ENCODE measurements at regions of chr5 and their contacts with region 1.

Region 1: DNA sequence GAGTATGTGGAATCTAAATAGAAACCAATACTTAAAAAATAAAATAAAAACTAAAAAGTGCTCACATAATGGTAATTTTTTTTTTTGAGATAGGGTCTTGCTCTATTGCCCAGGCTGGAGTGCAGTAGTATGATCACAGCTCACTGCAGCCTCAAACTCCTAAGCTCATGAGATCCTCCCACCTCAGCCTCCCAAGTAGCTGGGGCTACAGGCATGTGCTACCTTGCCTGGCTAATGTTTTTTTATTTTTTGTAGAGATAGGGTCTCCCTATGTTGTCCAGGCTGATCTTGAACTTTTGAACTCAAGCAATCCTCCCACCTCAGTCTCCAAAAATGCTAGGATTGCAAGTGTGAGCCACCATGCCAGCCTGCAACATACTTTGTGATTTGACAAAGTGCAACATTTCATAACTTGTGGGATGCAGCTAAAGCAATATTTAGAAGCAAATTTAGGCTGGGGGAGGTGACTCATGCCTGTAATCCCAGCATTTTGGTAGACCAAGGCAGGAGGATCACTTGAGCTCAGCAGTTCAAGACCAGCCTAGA is 18.4 kb downstream of the AP3B1 start:
- DNase-seq: no peak
- ATAC-seq: no peak
- H3K4me3 ChIP-seq: no peak overlapping the region
- H3K4me3 Mint-ChIP-seq: no peak overlapping the region
- H3K27ac ChIP-seq: no peak overlapping the region
- H3K27ac Mint-ChIP-seq: no peak overlapping the region
- H3K4me1 ChIP-seq: no peaks in the 10 kb centered on the region
- H3K4me1 Mint-ChIP-seq: peaks cover 49% of the 10 kb centered on the region
- H3K27me3 ChIP-seq: no peaks in the 10 kb centered on the region
- H3K27me3 Mint-ChIP-seq: no peaks in the 10 kb centered on the region
- CTCF ChIP-seq: no peak

Region 2: DNA sequence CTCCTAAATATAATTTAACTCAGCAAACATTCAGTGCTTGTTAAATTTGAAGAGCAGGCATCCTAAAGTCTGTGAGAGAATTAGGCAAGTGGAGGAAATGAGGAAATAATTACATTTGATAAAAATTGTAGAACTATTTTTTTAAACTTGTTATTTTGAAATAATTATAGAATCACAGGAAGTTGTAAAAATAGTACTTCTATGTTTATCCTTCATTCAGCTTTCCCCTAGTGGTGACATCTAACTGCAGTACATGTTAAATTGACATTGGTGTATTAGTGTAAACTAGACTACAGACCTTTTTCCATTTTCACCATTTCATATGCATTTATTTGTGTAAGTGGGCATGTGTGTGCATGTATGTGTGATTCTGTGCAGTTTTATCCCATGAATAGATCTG is 1704.5 kb before region 1 on chr5:
- CTCF ChIA-PET with region 1: no interaction called
- POLR2A ChIA-PET with region 1: no interaction called
- intact Hi-C with region 1: loop called in 1 of 2 experiments (anchors 5 kb)
- DNase-seq: no peak
- ATAC-seq: no peak
- H3K4me3 ChIP-seq: no peak overlapping the region
- H3K4me3 Mint-ChIP-seq: no peak overlapping the region
- H3K27ac ChIP-seq: no peak overlapping the region
- H3K27ac Mint-ChIP-seq: peak overlapping the region; percentile 45
- H3K4me1 ChIP-seq: no peaks in the 10 kb centered on the region
- H3K4me1 Mint-ChIP-seq: peaks cover 19% of the 10 kb centered on the region
- H3K27me3 ChIP-seq: no peaks in the 10 kb centered on the region
- H3K27me3 Mint-ChIP-seq: no peaks in the 10 kb centered on the region
- CTCF ChIP-seq: no peak

Region 3: GRCh38 chr5:78308703-78309102 is 32.6 kb after region 1 on chr5:
- CTCF ChIA-PET with region 1: no interaction called
- POLR2A ChIA-PET with region 1: no interaction called
- intact Hi-C with region 1: no loop called
- DNase-seq: no peak
- ATAC-seq: no peak
- H3K4me3 ChIP-seq: no peak overlapping the region
- H3K4me3 Mint-ChIP-seq: no peak overlapping the region
- H3K27ac ChIP-seq: no peak overlapping the region
- H3K27ac Mint-ChIP-seq: no peak overlapping the region
- H3K4me1 ChIP-seq: no peaks in the 10 kb centered on the region
- H3K4me1 Mint-ChIP-seq: no peaks in the 10 kb centered on the region
- H3K27me3 ChIP-seq: no peaks in the 10 kb centered on the region
- H3K27me3 Mint-ChIP-seq: peaks cover 40% of the 10 kb centered on the region
- CTCF ChIP-seq: no peak